Natural killer cell (primary cell): ENCODE measurements at regions of chr2 and their contacts with region 1.

Region 1: DNA sequence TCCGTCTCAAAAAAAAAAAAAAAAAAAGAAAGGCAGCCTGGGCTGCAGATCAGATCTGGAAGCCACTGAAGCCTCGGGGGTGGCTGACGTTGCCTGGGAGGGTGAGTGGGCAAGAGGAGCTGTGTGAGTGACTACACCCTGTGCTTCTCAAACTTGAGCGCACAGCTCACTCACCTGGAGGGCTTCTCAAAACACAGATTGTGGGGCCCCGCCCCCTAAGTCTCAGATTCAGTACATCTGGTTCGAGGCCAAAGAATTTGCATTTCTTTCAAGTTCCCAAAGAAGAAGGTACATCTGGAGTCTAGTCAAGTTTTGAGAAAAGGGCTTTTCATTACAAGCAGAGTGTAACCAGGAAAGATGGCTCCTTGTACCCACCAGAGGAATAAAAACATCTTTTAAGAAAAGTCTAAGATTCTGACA is 97.7 kb upstream of the CAB39 start:
- DNase-seq: peak in 1 of 2 donors; percentile 32
- ATAC-seq: no peak
- H3K4me3 ChIP-seq: no peak overlapping the region
- H3K4me3 Mint-ChIP-seq: no peak overlapping the region
- H3K27ac ChIP-seq: no peak overlapping the region
- H3K27ac Mint-ChIP-seq: no peak overlapping the region
- H3K4me1 ChIP-seq: peaks cover 6% of the 10 kb centered on the region
- H3K4me1 Mint-ChIP-seq: peaks cover 7% of the 10 kb centered on the region in 2 donors
- H3K27me3 ChIP-seq: no peaks in the 10 kb centered on the region
- H3K27me3 Mint-ChIP-seq: no peaks in the 10 kb centered on the region
- CTCF ChIP-seq: no peak

Region 2: GRCh38 chr2:230007931-230008707 is 606.8 kb before region 1 on chr2:
- intact Hi-C with region 1: loop called (anchors 1 kb)
- DNase-seq: peak; percentile 69 to 81
- ATAC-seq: peak; percentile 66 to 73 (median 69)
- H3K4me3 ChIP-seq: no peak overlapping the region
- H3K4me3 Mint-ChIP-seq: no peak overlapping the region
- H3K27ac ChIP-seq: no peak overlapping the region
- H3K27ac Mint-ChIP-seq: no peak overlapping the region
- H3K4me1 ChIP-seq: no peaks in the 10 kb centered on the region
- H3K4me1 Mint-ChIP-seq: peaks cover 0 to 11% of the 10 kb centered on the region in 2 donors
- H3K27me3 ChIP-seq: no peaks in the 10 kb centered on the region
- H3K27me3 Mint-ChIP-seq: no peaks in the 10 kb centered on the region
- CTCF ChIP-seq: peak; percentile 89

Region 3: DNA sequence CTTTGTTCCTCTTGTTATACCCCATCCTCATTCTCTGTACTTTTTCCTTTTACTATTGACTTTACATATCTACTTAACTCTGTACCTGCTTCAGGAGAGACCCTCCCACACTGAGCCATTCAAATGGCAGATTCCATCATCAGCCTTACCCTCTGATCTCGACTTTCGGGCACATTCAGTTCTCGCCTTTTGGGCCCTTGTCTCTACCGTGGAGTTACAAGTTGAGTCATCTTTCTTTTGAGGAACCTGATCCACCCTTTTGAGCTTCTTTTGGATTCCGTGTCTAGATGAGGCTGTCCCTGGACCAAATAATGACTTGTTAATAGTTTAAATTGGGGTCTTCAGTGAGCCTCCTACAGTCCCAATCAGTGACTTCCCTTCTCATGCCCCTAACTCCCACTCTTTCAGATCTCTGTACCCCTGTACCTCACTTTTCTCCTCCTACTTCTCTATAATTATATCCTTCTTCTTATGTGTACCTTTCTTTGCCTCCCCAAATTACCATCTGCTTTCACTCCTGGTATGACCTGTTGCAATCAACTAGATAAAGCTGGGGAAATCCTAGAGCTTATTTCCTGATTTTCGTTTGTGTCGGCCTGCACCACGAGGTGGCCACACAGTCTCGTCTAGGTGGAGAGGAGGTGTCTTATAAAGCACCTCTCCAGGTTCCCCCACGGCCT is 412.4 kb before region 1 on chr2:
- intact Hi-C with region 1: loop called (anchors 10 kb)
- DNase-seq: peak in 1 of 2 donors; percentile 44
- ATAC-seq: no peak
- H3K4me3 ChIP-seq: no peak overlapping the region
- H3K4me3 Mint-ChIP-seq: no peak overlapping the region
- H3K27ac ChIP-seq: no peak overlapping the region
- H3K27ac Mint-ChIP-seq: peak overlapping the region in 1 of 2 donors; percentile 63
- H3K4me1 ChIP-seq: no peaks in the 10 kb centered on the region
- H3K4me1 Mint-ChIP-seq: peaks cover 0 to 11% of the 10 kb centered on the region in 2 donors
- H3K27me3 ChIP-seq: no peaks in the 10 kb centered on the region
- H3K27me3 Mint-ChIP-seq: no peaks in the 10 kb centered on the region
- CTCF ChIP-seq: no peak

Region 4: DNA sequence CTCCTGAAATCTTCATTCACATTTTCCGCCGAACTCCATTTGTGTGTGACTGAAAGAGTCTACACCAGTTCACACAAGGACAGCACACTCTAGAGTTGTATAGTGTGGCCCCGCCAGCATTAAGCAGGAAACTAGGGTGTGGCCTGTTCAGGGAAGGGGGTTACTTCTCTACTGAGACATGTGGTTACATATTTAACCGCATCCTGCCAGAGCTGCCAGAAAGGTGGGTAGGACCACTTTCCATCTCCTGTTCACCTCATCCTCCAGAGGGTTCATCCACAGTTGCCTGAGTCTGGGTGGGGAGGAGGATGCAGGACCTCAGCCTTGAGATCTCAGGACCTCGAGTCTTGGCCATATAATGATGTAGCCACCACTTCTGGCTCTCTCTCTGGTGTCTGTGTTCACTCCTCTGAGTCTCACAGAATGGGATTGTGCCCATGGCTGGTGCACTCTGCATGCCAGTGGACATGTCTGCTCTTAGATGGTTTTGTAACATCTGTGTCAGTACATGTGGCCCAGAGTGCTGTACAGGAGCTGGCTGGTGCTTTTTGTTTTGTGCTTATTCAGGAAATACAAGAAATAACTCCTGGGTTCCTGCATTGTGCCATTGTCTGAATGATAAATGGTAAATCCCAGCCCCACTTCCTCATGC is 295.6 kb before region 1 on chr2:
- intact Hi-C with region 1: loop called (anchors 5 kb)
- DNase-seq: peak; percentile 31 to 89
- ATAC-seq: peak; percentile 85 to 89 (median 88)
- H3K4me3 ChIP-seq: no peak overlapping the region
- H3K4me3 Mint-ChIP-seq: peak overlapping the region; percentile 83
- H3K27ac ChIP-seq: peak overlapping the region; percentile 53
- H3K27ac Mint-ChIP-seq: peak overlapping the region; percentile 79
- H3K4me1 ChIP-seq: peaks cover 43% of the 10 kb centered on the region
- H3K4me1 Mint-ChIP-seq: peaks cover 48 to 55% of the 10 kb centered on the region in 2 donors
- H3K27me3 ChIP-seq: no peaks in the 10 kb centered on the region
- H3K27me3 Mint-ChIP-seq: no peaks in the 10 kb centered on the region
- CTCF ChIP-seq: no peak